Left colon (tissue), 2 donors: ENCODE measurements at regions of chr1 and their contacts with region 1.

Region 1: DNA sequence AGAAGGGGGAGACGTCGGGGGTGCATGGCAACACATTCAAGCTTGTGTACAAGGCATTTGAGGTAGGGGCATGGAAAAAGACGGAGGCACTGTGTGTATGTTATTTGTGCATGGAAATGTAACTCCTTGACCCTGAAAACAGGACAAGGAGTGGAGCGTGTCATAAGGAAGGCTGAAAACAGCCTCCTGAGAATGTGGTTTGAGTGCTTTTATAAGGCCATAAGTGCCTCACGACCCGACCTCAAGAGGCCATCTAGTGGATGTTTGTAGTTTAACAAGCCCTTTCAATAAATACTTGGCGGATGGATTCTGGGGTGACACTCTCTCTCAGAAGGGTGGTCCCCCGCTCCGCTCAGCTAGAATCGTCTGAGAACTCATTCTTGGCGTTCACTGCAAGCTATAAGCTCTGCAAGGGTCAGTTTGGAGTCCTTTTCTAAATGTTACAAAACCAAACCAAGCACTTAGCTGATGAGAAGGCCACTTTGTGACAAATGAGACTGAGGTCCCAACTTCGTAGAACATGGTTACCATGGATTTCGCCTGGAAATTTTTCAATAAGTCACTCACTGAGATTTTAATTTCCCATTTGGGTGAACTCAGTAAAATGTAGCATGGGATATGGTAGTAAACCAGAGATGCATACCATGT is 38.8 kb upstream of the CLCA4 start:
- DNase-seq: no peak
- ATAC-seq: peak; percentile 35

Region 2: DNA sequence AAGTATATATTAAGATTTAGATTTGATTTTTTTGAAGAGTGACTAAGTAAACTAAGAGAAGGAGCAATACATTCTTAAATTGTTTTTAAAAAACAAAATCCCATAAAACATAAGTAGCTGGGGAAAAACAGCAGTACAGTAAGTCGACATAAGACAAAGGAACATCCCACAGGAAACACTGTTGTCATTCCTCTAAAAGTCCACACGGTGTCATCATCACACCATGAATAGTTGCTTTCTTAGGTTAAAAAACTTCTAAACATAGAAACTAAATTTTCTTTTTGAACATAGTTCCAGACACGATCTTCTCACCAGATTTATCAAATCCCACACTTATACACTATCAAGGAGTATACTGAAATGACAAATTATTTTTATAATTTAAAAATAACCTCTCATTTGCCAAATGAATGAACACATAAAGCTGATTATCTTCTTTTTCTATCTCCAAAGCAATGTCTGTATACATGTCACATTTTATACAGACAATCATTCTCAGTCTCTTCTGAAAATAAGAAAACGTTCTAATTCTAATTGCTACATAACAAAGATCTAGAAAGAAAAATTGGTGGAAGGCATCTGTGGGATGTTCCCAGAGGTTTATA is 127.7 kb before region 1 on chr1:
- intact Hi-C with region 1: loop called in 1 of 2 experiments (anchors 5 kb)
- DNase-seq: no peak
- ATAC-seq: peak; percentile 88

Region 3: GRCh38 chr1:86470859-86471258 is 37.2 kb before region 1 on chr1:
- intact Hi-C with region 1: loop called in 1 of 2 experiments (anchors 5 kb)
- DNase-seq: no peak
- ATAC-seq: no peak